ENCODE measurements at regions of chr13 and their contacts with region 1.

Region 1: GRCh38 chr13:23888658-23889614 is at the start of gene MIPEP:
- DNase-seq: peak; percentile 83 to 94
- ATAC-seq: peak; percentile 94 to 98 (median 97)
- H3K4me3 ChIP-seq: peak within 1 kb of the TSS; percentile 68
- H3K4me3 Mint-ChIP-seq: peak within 1 kb of the TSS; percentile 98
- H3K27ac ChIP-seq: peak within 1 kb of the TSS; percentile 36
- H3K27ac Mint-ChIP-seq: peak within 1 kb of the TSS; percentile 81 to 96
- H3K4me1 ChIP-seq: peaks cover 7% of the 10 kb centered on the region
- H3K4me1 Mint-ChIP-seq: peaks cover 21% of the 10 kb centered on the region in 2 donors
- H3K27me3 ChIP-seq: no peaks in the 10 kb centered on the region
- H3K27me3 Mint-ChIP-seq: no peaks in the 10 kb centered on the region
- CTCF ChIP-seq: peak; percentile 61
- total RNA-seq, gene MIPEP: 9.7 to 10.1 (median 9.7) TPM

Region 2: DNA sequence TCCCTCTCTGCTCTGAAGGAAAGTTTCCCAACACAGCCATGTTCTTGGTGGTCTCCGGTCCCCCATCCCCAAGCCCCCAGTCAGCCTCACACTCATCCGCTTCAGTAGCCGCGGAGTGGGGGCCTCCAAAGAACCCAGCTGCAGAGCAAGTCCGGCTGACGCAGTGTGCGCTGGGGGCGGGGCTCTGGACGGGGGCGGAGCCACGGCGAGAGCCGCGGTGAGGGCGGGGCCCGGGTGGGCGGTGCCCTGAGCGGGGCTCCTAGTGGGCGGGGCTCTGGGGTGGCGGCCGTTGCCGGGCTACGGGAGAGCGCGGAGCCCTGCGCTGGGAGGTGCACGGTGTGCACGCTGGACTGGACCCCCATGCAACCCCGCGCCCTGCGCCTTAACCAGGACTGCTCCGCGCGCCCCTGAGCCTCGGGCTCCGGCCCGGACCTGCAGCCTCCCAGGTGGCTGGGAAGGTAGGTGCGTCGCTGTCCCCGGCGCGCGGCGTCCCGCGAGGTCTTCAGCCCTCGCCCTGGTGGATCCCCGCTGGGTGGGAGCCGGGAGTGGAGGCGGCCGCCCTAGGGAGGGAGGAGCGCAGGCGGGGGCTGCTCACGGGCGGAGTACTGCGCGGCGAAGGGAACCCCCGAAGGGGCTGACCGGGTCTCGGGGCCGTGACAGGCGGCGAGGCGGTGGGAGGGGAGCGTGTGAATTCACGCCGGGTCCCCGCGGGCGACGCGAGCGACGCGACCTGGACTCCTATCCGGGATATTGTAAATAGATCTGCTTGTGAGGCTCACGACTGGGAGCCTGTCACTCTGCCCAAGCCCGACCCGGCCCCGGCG is 309.7 kb before region 1 on chr13:
- intact Hi-C with region 1: loop called (anchors 5 kb)
- DNase-seq: peak; percentile 91 to 93
- ATAC-seq: peak; percentile 95 to 99 (median 96)
- H3K4me3 ChIP-seq: peak overlapping the region; percentile 60
- H3K4me3 Mint-ChIP-seq: peak overlapping the region; percentile 82
- H3K27ac ChIP-seq: peak overlapping the region; percentile 63
- H3K27ac Mint-ChIP-seq: peak overlapping the region; percentile 45 to 51
- H3K4me1 ChIP-seq: peaks cover 14% of the 10 kb centered on the region
- H3K4me1 Mint-ChIP-seq: peaks cover 26 to 27% of the 10 kb centered on the region in 2 donors
- H3K27me3 ChIP-seq: peaks cover 14% of the 10 kb centered on the region
- H3K27me3 Mint-ChIP-seq: peaks cover 30 to 52% of the 10 kb centered on the region in 2 donors
- CTCF ChIP-seq: peak; percentile 1